ENCODE measurements at regions of chr4 and their contacts with region 1.

Region 1: GRCh38 chr4:179307297-179308136 is 1865.3 kb upstream of the AGA start:
- DNase-seq: peak; percentile 32
- ATAC-seq: no peak
- H3K4me3 Mint-ChIP-seq: no peak overlapping the region
- H3K27ac Mint-ChIP-seq: no peak overlapping the region
- H3K4me1 Mint-ChIP-seq: no peaks in the 10 kb centered on the region
- H3K27me3 Mint-ChIP-seq: no peaks in the 10 kb centered on the region

Region 2: GRCh38 chr4:178577933-178578332 is 729.6 kb before region 1 on chr4:
- CTCF ChIA-PET with region 1: no interaction called
- POLR2A ChIA-PET with region 1: no interaction called
- intact Hi-C with region 1: loop called in 1 of 2 experiments (anchors 5 kb)
- DNase-seq: no peak
- ATAC-seq: no peak
- H3K4me3 Mint-ChIP-seq: no peak overlapping the region
- H3K27ac Mint-ChIP-seq: no peak overlapping the region
- H3K4me1 Mint-ChIP-seq: no peaks in the 10 kb centered on the region
- H3K27me3 Mint-ChIP-seq: no peaks in the 10 kb centered on the region

Measured in activated CD4-positive, alpha-beta T cell treated with anti-CD3 and anti-CD28 coated beads for 36 hours (primary cell).